Left ventricle myocardium superior (tissue), 1 donor: ENCODE measurements at regions of chr9 and their contacts with region 1.

Region 1: GRCh38 chr9:4762108-4762885 is 21.3 kb upstream of the AK3 start:
- DNase-seq: peak; percentile 76
- ATAC-seq: peak; percentile 74

Region 2: GRCh38 chr9:4832786-4833579 is 70.7 kb after region 1 on chr9:
- intact Hi-C with region 1: no loop called
- DNase-seq: no peak
- ATAC-seq: no peak

Region 3: GRCh38 chr9:4984621-4985385 is 222.5 kb after region 1 on chr9 and contains the start of gene JAK2:
- intact Hi-C with region 1: loop called (anchors 5 kb)
- DNase-seq: peak; percentile 95
- ATAC-seq: peak; percentile 95
- total RNA-seq, gene JAK2: 21.5 TPM

Region 4: DNA sequence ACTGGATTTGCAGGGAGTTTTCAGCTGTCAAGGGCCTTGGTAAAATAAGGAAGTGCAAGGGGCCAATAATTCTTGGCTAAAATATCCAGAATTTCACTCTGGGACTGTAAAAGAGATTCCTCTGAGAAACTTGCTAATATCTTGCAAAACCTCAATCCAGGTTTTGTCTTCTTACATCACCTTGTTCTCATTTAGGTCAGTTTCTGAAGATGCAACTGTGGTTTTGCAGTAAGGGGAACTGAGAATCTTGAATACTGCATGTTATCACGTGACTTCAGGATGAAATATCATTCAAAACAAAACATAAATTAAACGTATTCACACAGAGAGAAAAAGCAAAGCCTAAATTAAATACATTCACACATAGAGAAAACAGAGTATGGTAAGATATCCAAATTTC is 831.6 kb after region 1 on chr9:
- intact Hi-C with region 1: loop called (anchors 10 kb)
- DNase-seq: no peak
- ATAC-seq: no peak